Common myeloid progenitor, CD34-positive (primary cell): ENCODE measurements at regions of chr16 and their contacts with region 1.

Region 1: GRCh38 chr16:1054660-1055556 is 17.6 kb upstream of the SSTR5 start:
- DNase-seq: peak in 2 of 3 donors; percentile 13 to 23
- H3K4me3 ChIP-seq: no peak overlapping the region
- H3K27ac ChIP-seq: no peak overlapping the region
- H3K4me1 ChIP-seq: no peaks in the 10 kb centered on the region
- H3K27me3 ChIP-seq: peaks cover 0 to 32% (median 6%) of the 10 kb centered on the region in 5 experiments

Region 2: DNA sequence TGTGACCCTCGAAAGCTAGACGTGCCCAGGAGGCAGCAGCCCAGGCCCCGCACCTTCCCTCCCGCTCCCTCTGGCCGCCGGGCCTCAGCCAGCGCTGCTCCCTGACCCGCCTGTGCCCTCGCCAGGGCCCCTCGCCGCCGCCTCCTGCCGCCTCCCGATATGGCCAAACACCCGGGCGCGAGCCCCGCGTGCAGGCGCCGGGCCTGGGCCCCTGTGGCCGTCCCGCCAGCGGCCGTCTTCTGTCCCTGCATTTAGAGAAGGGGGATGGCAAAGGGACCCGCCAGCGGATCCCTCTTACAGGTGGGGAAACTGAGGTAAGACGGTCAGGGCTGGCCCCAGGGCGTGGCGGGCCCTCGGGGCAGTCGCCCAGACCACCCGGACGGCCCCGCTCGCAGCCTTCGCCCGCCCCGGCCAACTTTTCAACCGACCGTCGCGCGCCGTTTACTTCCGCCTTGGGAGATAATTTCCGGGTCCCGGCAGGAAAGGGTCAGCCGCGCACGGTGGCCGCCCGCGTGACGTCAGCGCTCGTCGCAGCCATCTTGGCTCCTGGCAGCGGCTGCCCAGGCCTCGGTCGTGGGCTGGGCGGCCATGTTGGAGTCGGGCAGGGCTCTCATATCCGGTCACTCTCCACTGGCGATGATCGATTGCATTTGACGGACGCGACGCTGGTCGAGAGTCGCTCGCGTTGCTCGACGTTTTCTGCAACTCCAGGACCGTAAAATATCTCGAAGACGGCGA is 247.4 kb before region 1 on chr16:
- CTCF ChIA-PET with region 1: interaction called, 11 read pairs
- POLR2A ChIA-PET with region 1: no interaction called
- DNase-seq: peak; percentile 78 to 87 (median 82)
- H3K4me3 ChIP-seq: peak overlapping the region; percentile 62 to 82 (median 75)
- H3K27ac ChIP-seq: peak overlapping the region; percentile 54 to 82
- H3K4me1 ChIP-seq: peaks cover 0 to 11% (median 6%) of the 10 kb centered on the region in 4 experiments
- H3K27me3 ChIP-seq: peaks cover 0 to 18% (median 2%) of the 10 kb centered on the region in 5 experiments